HEK293 (cell line): ENCODE measurements at regions of chr16 and their contacts with region 1.

Region 1: GRCh38 chr16:57785924-57786323 is 16.4 kb downstream of the KIFC3 start:
- H3K4me3 ChIP-seq: no peak overlapping the region
- H3K27ac ChIP-seq: no peak overlapping the region
- H3K4me1 ChIP-seq: no peaks in the 10 kb centered on the region
- CTCF ChIP-seq: no peak

Region 2: GRCh38 chr16:57764341-57765159 is 21.4 kb before region 1 on chr16:
- CTCF ChIA-PET with region 1: no interaction called
- POLR2A ChIA-PET with region 1: no interaction called
- H3K4me3 ChIP-seq: no peak overlapping the region
- H3K27ac ChIP-seq: peak overlapping the region; percentile 58; the same call in 1 of the 2 replicates
- H3K4me1 ChIP-seq: peaks cover 4% of the 10 kb centered on the region
- CTCF ChIP-seq: no peak

Region 3: GRCh38 chr16:57810197-57811031 is 24.5 kb after region 1 on chr16:
- CTCF ChIA-PET with region 1: no interaction called
- POLR2A ChIA-PET with region 1: no interaction called
- H3K4me3 ChIP-seq: no peak overlapping the region
- H3K27ac ChIP-seq: no peak overlapping the region; the same call in 1 of the 2 replicates
- H3K4me1 ChIP-seq: peaks cover 6% of the 10 kb centered on the region
- CTCF ChIP-seq: no peak

Region 4: DNA sequence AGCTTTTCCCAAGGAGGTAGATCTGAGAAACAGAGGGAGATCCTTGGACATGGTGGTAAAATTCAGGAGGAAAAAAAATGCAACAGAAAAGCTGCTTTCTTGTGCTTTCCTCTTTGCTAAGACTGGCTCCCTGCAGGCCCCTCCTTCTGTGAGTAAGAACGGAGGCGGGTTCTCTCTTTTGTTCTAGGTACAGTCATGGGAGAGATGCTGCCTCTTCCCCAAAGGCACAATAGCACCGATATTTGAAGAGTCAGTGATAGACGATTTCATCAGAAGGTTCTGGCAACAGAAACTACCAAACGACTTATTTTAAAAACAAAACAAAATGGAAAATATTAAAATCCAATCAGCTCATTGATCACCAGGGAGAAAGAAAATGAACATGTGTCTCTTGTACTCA is 49.0 kb after region 1 on chr16:
- CTCF ChIA-PET with region 1: no interaction called
- POLR2A ChIA-PET with region 1: no interaction called
- H3K4me3 ChIP-seq: no peak overlapping the region
- H3K27ac ChIP-seq: no peak overlapping the region
- H3K4me1 ChIP-seq: no peaks in the 10 kb centered on the region
- CTCF ChIP-seq: no peak

Region 5: GRCh38 chr16:57871456-57871855 is 85.5 kb after region 1 on chr16:
- CTCF ChIA-PET with region 1: no interaction called
- POLR2A ChIA-PET with region 1: interaction called, 16 read pairs
- H3K4me3 ChIP-seq: no peak overlapping the region
- H3K27ac ChIP-seq: no peak overlapping the region
- H3K4me1 ChIP-seq: peaks cover 11% of the 10 kb centered on the region
- CTCF ChIP-seq: no peak